MCF 10A (cell line): ENCODE measurements at regions of chr6 and their contacts with region 1.

Region 1: DNA sequence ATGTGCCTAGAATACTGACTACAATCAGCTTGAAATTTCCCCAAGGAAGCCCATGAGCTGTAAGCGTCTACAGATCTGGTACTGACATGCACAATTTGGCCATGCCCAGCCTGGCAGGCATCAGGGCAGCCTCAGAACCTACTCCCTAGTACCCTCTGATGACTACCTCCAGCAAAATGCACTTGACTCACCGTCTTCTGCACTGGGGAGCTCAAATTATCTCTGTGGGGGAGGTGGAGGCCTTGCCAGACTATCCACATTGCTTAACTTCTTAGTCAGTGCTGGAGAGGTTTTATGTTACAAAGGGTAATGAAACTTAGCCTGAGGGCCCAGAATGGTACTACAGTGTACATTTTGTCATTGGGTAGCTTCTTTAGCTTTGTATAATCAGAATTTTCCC is 126.1 kb upstream of the ADGRF1 start:
- DNase-seq: peak; percentile 99
- H3K4me3 Mint-ChIP-seq: peak overlapping the region; percentile 33
- H3K27ac Mint-ChIP-seq: peak overlapping the region; percentile 74
- H3K4me1 Mint-ChIP-seq: peaks cover 37% of the 10 kb centered on the region
- H3K27me3 Mint-ChIP-seq: no peaks in the 10 kb centered on the region
- CTCF ChIP-seq: no peak

Region 2: GRCh38 chr6:47103931-47104330 is 64.3 kb before region 1 on chr6:
- CTCF ChIA-PET with region 1: interaction called, 8 read pairs
- POLR2A ChIA-PET with region 1: interaction called, 36 read pairs
- intact Hi-C with region 1: no loop called
- DNase-seq: peak; percentile 72
- H3K4me3 Mint-ChIP-seq: no peak overlapping the region
- H3K27ac Mint-ChIP-seq: no peak overlapping the region
- H3K4me1 Mint-ChIP-seq: peaks cover 14% of the 10 kb centered on the region
- H3K27me3 Mint-ChIP-seq: no peaks in the 10 kb centered on the region
- CTCF ChIP-seq: no peak

Region 3: GRCh38 chr6:47144299-47144698 is 23.9 kb before region 1 on chr6:
- CTCF ChIA-PET with region 1: no interaction called
- POLR2A ChIA-PET with region 1: interaction called, 12 read pairs
- intact Hi-C with region 1: no loop called
- DNase-seq: peak; percentile 91
- H3K4me3 Mint-ChIP-seq: no peak overlapping the region
- H3K27ac Mint-ChIP-seq: peak overlapping the region; percentile 95
- H3K4me1 Mint-ChIP-seq: peaks cover 36% of the 10 kb centered on the region
- H3K27me3 Mint-ChIP-seq: no peaks in the 10 kb centered on the region
- CTCF ChIP-seq: no peak

Region 4: DNA sequence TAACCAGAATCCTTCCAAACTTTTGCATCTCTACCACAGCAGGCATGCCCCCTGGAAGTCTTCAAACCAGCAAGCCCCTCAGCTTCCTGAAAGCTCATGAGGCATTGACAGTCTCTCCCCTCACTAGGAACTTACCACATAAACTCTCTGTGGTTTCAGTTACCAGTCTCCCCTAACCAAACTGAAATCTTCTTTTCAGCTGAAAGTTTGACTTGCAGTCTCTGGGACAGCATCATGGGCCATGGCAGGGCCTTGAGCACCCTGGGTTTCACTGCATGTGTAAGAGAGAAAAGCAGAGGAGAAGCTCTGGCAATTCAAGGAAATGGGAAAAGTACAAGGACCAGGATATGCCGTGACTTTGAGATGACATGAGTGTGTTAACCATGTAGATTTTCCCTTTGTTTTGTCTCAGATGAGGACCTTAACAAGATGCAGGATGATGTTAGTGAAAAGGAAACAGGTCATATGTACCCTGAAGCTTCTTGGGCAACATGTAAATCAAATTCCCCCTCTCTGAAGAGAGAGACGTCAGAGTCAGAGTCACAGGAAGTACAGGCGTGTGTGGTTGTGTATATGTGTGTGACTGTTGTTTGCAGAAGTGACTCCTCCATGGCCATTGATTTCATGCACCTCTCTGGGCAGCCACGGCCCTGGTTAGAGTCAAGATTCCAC is 35.2 kb after region 1 on chr6:
- CTCF ChIA-PET with region 1: no interaction called
- POLR2A ChIA-PET with region 1: interaction called, 19 read pairs
- intact Hi-C with region 1: no loop called
- DNase-seq: no peak
- H3K4me3 Mint-ChIP-seq: no peak overlapping the region
- H3K27ac Mint-ChIP-seq: no peak overlapping the region
- H3K4me1 Mint-ChIP-seq: peaks cover 45% of the 10 kb centered on the region
- H3K27me3 Mint-ChIP-seq: no peaks in the 10 kb centered on the region
- CTCF ChIP-seq: no peak

Region 5: DNA sequence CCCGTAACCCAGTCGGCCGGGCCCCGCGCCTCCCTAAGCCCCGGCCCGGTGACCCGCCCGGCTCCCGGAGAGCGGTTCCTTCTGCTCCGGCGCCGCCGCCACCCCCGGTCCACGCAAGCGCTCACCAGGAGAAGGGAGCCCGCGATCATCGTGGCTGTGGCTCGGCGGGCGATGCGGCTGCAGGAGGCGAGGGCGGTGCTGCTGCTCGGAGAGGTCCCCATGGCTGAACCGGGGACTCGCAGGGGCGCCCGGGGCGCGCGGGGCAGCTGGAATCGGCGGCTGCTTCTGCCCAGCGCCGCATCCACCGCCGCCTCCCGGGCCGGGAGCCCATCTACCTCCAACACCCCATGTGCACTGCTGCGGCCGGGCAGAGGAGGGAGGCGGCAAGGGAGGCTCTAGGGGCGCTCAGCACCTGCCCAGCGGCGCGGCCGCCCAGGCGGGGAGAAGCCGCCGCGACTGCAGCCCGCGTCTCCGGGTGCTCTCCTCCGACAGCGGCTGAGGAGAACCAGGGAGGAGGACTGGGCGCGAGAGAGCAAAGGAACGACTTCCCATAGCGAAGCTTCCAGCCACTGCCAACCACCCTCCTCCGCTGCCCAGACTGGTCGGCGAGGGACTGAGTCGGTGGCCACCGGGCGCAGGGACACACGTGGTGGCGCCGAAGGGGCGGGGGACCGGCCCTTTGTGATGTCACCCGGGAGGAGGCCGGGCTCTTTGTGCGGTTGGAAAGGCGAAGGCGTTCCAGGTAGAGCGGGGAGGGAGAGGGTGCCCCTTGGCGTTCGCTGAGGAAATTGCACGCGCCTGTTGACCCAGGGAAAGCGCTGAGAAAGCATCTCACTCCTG is 141.3 kb after region 1 on chr6 and contains the start of gene TNFRSF21:
- CTCF ChIA-PET with region 1: interaction called, 3 read pairs
- POLR2A ChIA-PET with region 1: interaction called, 21 read pairs
- intact Hi-C with region 1: loop called (anchors 1 kb)
- DNase-seq: peak; percentile 91
- H3K4me3 Mint-ChIP-seq: peak within 1 kb of the TSS; percentile 89
- H3K27ac Mint-ChIP-seq: peak within 1 kb of the TSS; percentile 77
- H3K4me1 Mint-ChIP-seq: peaks cover 12% of the 10 kb centered on the region
- H3K27me3 Mint-ChIP-seq: no peaks in the 10 kb centered on the region
- CTCF ChIP-seq: peak; percentile 90
- total RNA-seq, gene TNFRSF21: 17.8 and 19.3 TPM in 2 replicates